MCF 10A (cell line): ENCODE measurements at regions of chr20 and their contacts with region 1.

Region 1: DNA sequence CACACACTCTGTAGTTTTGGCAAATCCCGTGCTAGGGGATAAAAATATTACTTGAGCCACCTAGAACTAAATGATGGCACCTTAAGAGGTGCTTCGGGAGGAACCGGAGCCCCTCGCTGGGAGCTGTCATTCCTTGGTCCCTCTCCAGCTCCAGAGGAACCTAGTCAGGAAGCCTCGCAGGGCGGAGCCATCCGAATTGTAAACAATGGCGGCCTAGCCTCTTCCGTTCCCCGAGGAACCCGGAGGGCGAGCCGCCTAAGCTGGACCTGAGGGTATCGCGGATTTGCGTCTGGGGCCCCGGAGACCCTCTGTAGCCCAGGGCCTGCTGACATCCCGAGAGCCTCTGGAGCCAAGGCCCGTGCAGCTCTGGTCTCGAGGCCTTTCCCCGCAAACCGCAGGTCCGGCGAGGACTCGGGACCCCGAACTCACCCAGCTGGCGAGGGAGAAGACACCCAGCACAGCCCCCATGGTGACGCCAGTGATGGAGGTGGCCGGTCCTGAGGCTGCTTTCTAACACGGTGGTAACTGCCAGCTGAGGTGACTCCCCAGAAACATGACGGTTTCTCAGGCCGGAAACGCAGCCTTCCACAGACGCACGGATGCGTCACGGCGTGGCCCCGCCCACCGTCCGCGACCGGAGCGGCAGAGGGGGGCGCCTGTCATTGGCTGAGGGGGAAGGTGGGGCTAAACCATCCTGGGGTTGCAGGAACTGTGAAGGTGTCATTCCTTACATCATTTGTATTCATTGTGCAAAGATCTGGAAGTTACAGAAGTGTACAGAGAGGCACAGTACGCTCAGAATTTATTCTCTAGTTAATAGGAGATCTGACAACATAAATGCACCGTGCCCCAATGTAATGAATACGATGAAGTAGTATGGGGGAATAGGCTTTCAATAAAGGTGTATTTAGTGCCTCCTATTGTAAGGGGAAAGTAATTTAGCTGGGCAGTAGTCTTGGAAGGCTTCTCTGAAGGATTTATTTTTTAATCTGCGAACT is at the start of gene SERINC3:
- DNase-seq: peak; percentile 95
- H3K4me3 Mint-ChIP-seq: peak within 1 kb of the TSS; percentile 84
- H3K27ac Mint-ChIP-seq: peak within 1 kb of the TSS; percentile 95
- H3K4me1 Mint-ChIP-seq: peaks cover 35% of the 10 kb centered on the region
- H3K27me3 Mint-ChIP-seq: no peaks in the 10 kb centered on the region
- CTCF ChIP-seq: no peak
- total RNA-seq, gene SERINC3: 104 and 126 TPM in 2 replicates

Region 2: DNA sequence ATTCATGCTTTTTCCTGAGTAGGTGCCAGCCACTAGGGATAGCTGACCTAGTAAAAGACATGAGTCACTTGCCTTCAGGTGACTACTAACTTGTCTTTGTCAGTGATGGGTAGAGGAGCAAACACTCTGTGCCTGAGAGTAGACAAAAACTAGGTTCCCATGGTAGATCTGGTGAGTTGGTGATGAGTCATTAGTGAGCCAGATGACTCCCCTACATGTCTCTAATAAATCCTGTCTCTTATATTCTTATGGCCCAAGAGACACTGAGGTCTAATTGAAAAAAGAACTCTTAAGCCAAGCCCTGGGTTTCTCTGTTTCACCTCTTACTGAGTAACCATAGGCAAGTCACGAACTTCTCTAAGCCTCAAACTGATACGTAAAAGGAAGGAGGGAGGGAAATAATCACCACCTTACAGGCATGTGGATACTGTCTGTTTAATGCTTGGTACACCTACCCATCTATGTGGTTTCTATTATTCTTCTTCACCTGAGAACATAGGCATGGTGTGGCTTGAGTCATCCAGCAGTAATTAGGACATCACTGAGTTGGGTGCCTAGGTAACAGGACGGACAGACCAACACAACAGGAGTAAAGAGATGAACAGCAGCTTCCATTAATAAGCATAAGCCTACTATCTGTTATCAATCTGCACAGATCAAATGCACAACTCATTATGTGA is 25.8 kb before region 1 on chr20:
- CTCF ChIA-PET with region 1: interaction called, 6 read pairs
- POLR2A ChIA-PET with region 1: interaction called, 56 read pairs
- intact Hi-C with region 1: loop called (anchors 2 kb)
- DNase-seq: peak; percentile 95
- H3K4me3 Mint-ChIP-seq: peak overlapping the region; percentile 26
- H3K27ac Mint-ChIP-seq: peak overlapping the region; percentile 84
- H3K4me1 Mint-ChIP-seq: peaks cover 47% of the 10 kb centered on the region
- H3K27me3 Mint-ChIP-seq: no peaks in the 10 kb centered on the region
- CTCF ChIP-seq: no peak

Region 3: DNA sequence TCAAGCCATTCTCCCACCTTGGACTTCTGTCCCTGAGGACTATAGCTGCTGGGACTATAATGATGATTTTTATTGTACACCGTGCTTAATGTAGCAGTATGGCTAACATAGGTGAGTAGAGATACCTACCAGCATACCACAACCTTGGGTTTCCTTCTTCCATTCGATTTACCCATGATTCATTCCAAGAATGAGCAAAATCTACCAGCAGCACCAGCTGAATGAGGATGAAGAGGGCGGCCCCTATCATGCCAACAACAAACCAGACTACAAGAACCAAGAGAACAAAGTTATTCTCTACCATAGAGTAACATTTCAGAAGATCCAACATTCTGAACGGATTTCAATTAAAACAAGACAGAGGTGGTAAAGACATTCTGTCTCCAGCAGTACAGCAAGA is 12.0 kb before region 1 on chr20:
- CTCF ChIA-PET with region 1: interaction called, 5 read pairs
- POLR2A ChIA-PET with region 1: interaction called, 23 read pairs
- intact Hi-C with region 1: no loop called
- DNase-seq: no peak
- H3K4me3 Mint-ChIP-seq: no peak overlapping the region
- H3K27ac Mint-ChIP-seq: no peak overlapping the region
- H3K4me1 Mint-ChIP-seq: no peaks in the 10 kb centered on the region
- H3K27me3 Mint-ChIP-seq: no peaks in the 10 kb centered on the region
- CTCF ChIP-seq: no peak

Region 4: GRCh38 chr20:44566013-44566412 is 44.2 kb after region 1 on chr20:
- CTCF ChIA-PET with region 1: interaction called, 7 read pairs
- POLR2A ChIA-PET with region 1: interaction called, 15 read pairs
- intact Hi-C with region 1: loop called (anchors 5 kb)
- DNase-seq: peak; percentile 17
- H3K4me3 Mint-ChIP-seq: no peak overlapping the region
- H3K27ac Mint-ChIP-seq: no peak overlapping the region
- H3K4me1 Mint-ChIP-seq: peaks cover 9% of the 10 kb centered on the region
- H3K27me3 Mint-ChIP-seq: no peaks in the 10 kb centered on the region
- CTCF ChIP-seq: no peak

Region 5: DNA sequence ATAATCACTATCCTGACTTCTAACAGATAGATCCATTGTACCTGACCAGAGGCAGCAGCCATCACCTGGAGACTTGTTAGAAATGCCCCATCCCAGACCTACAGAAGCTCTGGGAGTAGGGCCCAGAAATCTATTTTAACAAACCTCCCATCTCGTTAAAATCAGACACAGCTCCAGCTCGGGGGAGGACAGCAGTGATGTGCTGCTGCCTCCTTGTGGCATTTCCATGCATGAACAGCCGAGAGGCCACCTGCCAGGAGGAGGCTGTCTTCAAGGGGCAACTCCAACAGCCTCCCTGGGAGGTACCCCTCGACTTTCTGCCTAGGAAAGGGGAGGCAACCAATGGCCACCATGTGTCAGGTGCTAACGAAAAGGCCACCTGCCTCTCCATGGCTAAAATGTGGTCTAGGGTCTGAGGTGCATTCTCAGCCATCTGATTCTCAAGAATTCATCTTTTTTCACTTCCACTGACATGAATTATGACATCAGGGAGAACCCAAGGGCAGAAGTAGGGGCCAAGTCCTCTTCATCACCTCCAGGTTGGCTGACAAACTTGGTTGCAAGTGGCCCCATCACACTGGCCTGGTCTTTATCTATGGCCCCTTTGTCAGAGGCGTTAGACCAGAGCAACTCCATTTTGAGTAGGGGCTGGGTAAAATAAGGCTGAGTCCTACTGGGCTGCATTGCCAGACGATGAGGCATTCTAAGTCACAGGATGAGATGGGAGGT is 211.7 kb after region 1 on chr20:
- CTCF ChIA-PET with region 1: interaction called, 3 read pairs
- POLR2A ChIA-PET with region 1: interaction called, 3 read pairs
- intact Hi-C with region 1: loop called (anchors 10 kb)
- DNase-seq: peak; percentile 78
- H3K4me3 Mint-ChIP-seq: peak overlapping the region; percentile 24
- H3K27ac Mint-ChIP-seq: peak overlapping the region; percentile 74
- H3K4me1 Mint-ChIP-seq: peaks cover 54% of the 10 kb centered on the region
- H3K27me3 Mint-ChIP-seq: no peaks in the 10 kb centered on the region
- CTCF ChIP-seq: peak; percentile 90